ENCODE measurements at regions of chr16 and their contacts with region 1.

Region 1: GRCh38 chr16:24041826-24042631 is 206.2 kb downstream of the PRKCB start:
- DNase-seq: no peak
- H3K4me3 ChIP-seq: no peak overlapping the region
- H3K27ac ChIP-seq: no peak overlapping the region
- H3K4me1 ChIP-seq: no peaks in the 10 kb centered on the region
- H3K27me3 ChIP-seq: peaks cover 0 to 4% (median 0%) of the 10 kb centered on the region in 4 donors
- CTCF ChIP-seq: peak; percentile 52 to 66 (median 63)
- EP300 ChIP-seq: no peak
- POLR2A ChIP-seq: no peak

Region 2: DNA sequence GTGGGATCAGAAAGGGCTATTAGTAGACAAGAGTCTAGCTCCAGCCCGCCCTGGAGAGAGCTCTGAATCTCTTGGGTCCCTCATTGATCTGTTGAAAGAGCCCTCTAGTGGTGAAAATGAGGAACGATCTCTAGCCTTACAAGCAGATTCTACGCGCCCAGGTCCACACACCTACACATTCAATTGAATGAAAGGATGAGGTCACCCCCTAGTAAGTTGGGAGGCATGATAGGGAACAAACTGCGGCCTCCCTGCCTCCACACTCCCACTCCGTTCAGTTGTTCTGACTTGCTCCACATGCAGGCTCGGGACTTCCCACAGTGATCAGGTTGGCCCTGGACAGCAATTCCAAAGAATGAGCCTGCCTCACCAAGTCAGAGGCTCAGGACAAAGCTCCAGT is 211.2 kb after region 1 on chr16:
- intact Hi-C with region 1: loop called (anchors 10 kb)
- DNase-seq: no peak
- H3K4me3 ChIP-seq: no peak overlapping the region
- H3K27ac ChIP-seq: no peak overlapping the region
- H3K4me1 ChIP-seq: no peaks in the 10 kb centered on the region
- H3K27me3 ChIP-seq: peaks cover 0 to 51% (median 2%) of the 10 kb centered on the region in 4 donors
- CTCF ChIP-seq: peak; percentile 30 to 57 (median 48)
- EP300 ChIP-seq: no peak
- POLR2A ChIP-seq: no peak

Region 3: GRCh38 chr16:24504472-24505345 is 462.7 kb after region 1 on chr16:
- intact Hi-C with region 1: loop called (anchors 2 kb)
- DNase-seq: no peak
- H3K4me3 ChIP-seq: no peak overlapping the region
- H3K27ac ChIP-seq: no peak overlapping the region
- H3K4me1 ChIP-seq: no peaks in the 10 kb centered on the region
- H3K27me3 ChIP-seq: peaks cover 0 to 17% (median 0%) of the 10 kb centered on the region in 4 donors
- CTCF ChIP-seq: peak; percentile 62 to 76 (median 68)
- EP300 ChIP-seq: no peak
- POLR2A ChIP-seq: no peak